Activated CD8-positive, alpha-beta memory T cell treated with anti-CD3 and anti-CD28 coated beads, Interleukin-2, amount 10 ng/mL, durations not matched to agents 7 days and 5 days (primary cell): ENCODE measurements at regions of chr10 and their contacts with region 1.

Region 1: GRCh38 chr10:43292755-43293676 is 26.2 kb upstream of the RASGEF1A start:
- DNase-seq: peak; percentile 76
- ATAC-seq: peak; percentile 68
- H3K4me3 Mint-ChIP-seq: no peak overlapping the region
- H3K27ac Mint-ChIP-seq: peak overlapping the region; percentile 85
- H3K4me1 Mint-ChIP-seq: peaks cover 53% of the 10 kb centered on the region
- H3K27me3 Mint-ChIP-seq: peaks cover 3% of the 10 kb centered on the region

Region 2: GRCh38 chr10:43078987-43079275 is 214.1 kb before region 1 on chr10:
- CTCF ChIA-PET with region 1: no interaction called
- DNase-seq: no peak
- ATAC-seq: no peak
- H3K4me3 Mint-ChIP-seq: no peak overlapping the region
- H3K27ac Mint-ChIP-seq: no peak overlapping the region
- H3K4me1 Mint-ChIP-seq: peaks cover 13% of the 10 kb centered on the region
- H3K27me3 Mint-ChIP-seq: peaks cover 43% of the 10 kb centered on the region

Region 3: GRCh38 chr10:43105102-43105785 is 187.8 kb before region 1 on chr10:
- CTCF ChIA-PET with region 1: no interaction called
- DNase-seq: peak; percentile 80
- ATAC-seq: peak; percentile 93
- H3K4me3 Mint-ChIP-seq: peak overlapping the region; percentile 70
- H3K27ac Mint-ChIP-seq: peak overlapping the region; percentile 52
- H3K4me1 Mint-ChIP-seq: peaks cover 37% of the 10 kb centered on the region
- H3K27me3 Mint-ChIP-seq: peaks cover 25% of the 10 kb centered on the region

Region 4: GRCh38 chr10:43265799-43266721 is 27.0 kb before region 1 on chr10:
- CTCF ChIA-PET with region 1: interaction called, 17 read pairs
- DNase-seq: peak; percentile 68
- ATAC-seq: peak; percentile 79
- H3K4me3 Mint-ChIP-seq: peak overlapping the region; percentile 58
- H3K27ac Mint-ChIP-seq: no peak overlapping the region
- H3K4me1 Mint-ChIP-seq: peaks cover 8% of the 10 kb centered on the region
- H3K27me3 Mint-ChIP-seq: peaks cover 57% of the 10 kb centered on the region

Region 5: GRCh38 chr10:43304687-43305340 is 11.8 kb after region 1 on chr10:
- CTCF ChIA-PET with region 1: interaction called, 33 read pairs
- DNase-seq: peak; percentile 72
- ATAC-seq: peak; percentile 73
- H3K4me3 Mint-ChIP-seq: peak overlapping the region; percentile 60
- H3K27ac Mint-ChIP-seq: peak overlapping the region; percentile 39
- H3K4me1 Mint-ChIP-seq: peaks cover 43% of the 10 kb centered on the region
- H3K27me3 Mint-ChIP-seq: peaks cover 16% of the 10 kb centered on the region

Region 6: DNA sequence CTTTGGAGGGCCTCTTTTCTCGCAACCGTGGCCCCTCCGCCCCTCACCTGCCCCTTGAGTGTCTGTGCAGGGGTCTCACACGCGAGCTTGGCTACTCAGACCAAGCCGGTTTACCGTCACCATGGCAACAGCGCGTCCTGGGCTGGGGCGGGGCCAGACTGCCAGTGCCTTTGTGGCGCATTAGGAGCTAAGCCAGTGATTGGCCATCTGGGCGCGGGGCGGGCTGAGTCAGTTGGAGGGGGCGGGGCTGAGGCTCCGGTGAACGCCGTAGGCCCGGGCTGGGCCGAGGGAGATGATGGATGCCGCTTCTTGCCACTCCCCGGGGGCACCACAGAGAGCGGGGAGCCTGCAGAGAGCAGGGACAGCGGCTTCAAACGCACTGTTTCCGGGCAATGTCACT is 29.8 kb after region 1 on chr10:
- CTCF ChIA-PET with region 1: interaction called, 14 read pairs
- DNase-seq: peak; percentile 94
- ATAC-seq: peak; percentile 100
- H3K4me3 Mint-ChIP-seq: peak overlapping the region; percentile 11
- H3K27ac Mint-ChIP-seq: peak overlapping the region; percentile 25
- H3K4me1 Mint-ChIP-seq: peaks cover 23% of the 10 kb centered on the region
- H3K27me3 Mint-ChIP-seq: peaks cover 6% of the 10 kb centered on the region

Region 7: GRCh38 chr10:43348511-43349312 is 55.7 kb after region 1 on chr10:
- CTCF ChIA-PET with region 1: interaction called, 153 read pairs
- DNase-seq: peak; percentile 93
- ATAC-seq: peak; percentile 100
- H3K4me3 Mint-ChIP-seq: no peak overlapping the region
- H3K27ac Mint-ChIP-seq: peak overlapping the region; percentile 58
- H3K4me1 Mint-ChIP-seq: peaks cover 24% of the 10 kb centered on the region
- H3K27me3 Mint-ChIP-seq: peaks cover 20% of the 10 kb centered on the region

Region 8: GRCh38 chr10:43461950-43462349 is 168.9 kb after region 1 on chr10:
- CTCF ChIA-PET with region 1: interaction called, 18 read pairs
- DNase-seq: no peak
- ATAC-seq: peak; percentile 95
- H3K4me3 Mint-ChIP-seq: no peak overlapping the region
- H3K27ac Mint-ChIP-seq: no peak overlapping the region
- H3K4me1 Mint-ChIP-seq: peaks cover 15% of the 10 kb centered on the region
- H3K27me3 Mint-ChIP-seq: no peaks in the 10 kb centered on the region